SK-N-SH (cell line): ENCODE measurements at regions of chr19 and their contacts with region 1.

Region 1: DNA sequence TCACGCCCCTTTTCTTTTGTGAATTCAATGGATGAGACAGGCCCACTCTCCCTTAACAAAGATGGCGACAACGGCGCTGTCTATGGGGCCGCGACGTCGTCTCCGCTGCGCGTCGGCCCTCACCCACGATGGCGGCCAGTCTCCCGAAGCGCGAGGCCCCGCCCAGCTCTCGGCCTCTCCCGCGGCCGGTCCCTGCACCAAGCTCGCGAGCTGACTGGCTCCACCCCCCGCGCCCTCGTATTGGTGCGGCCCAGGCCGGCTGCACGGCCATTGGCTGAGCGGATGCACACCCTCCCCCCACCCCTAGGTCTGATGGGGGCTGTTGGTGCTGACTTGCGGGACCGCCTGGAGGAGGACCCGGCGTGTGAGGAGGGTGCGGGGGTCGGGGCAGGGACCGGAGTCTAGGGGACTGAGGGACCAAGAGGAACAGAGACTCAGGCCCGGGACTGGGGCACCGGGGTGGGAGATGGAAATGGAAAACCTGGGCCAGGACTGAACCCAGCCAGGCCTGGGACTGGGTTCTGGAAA is 4.8 kb downstream of the SPHK2 start:
- DNase-seq: peak; percentile 97
- H3K4me3 ChIP-seq: peak overlapping the region; percentile 64 to 68
- H3K27ac ChIP-seq: peak overlapping the region; percentile 78 to 98
- H3K4me1 ChIP-seq: peaks cover 4 to 26% of the 10 kb centered on the region in 2 experiments; a peak in 2 of 4 replicates
- H3K27me3 ChIP-seq: no peaks in the 10 kb centered on the region
- CTCF ChIP-seq: no peak
- EP300 ChIP-seq: no peak
- RAD21 ChIP-seq: no peak

Region 2: DNA sequence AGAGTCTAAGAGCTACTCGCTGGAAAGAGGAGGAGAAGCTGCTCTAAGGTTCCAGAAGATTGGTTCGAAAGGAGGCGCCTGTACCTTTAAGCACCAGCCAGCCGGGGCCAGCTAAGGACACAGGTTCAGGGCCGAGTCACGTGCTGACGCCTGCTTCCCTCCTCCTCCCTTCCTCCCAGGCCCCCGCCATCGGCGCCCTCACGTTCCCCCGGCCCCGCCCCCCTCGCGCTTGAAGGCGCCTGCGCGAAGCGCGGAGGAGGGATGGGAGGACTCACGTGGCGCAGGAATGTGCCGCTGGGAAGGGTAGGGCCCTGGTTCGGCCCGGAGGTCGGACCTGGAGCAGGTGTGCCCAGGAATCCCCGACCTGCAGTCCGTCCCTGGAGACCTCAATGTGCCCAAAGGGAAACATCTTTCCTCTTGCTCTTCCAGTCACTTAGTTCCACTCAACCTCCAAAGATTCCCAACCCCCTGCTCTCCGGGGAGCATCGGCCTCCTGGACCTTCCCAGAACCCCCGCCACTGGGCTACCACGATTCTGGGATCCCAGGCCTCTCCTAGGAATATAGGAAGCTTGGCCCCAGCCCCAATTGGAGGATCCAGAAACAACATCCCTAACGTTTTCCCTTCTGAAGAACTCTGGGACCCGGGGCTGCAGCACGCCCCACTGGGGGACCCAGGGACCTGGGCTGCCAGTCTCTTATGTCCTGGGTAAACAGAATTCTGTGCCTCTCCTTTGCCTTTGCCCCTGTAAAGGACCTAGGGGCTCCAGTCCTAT is 10.5 kb after region 1 on chr19:
- CTCF ChIA-PET with region 1: interaction called, 6 read pairs
- POLR2A ChIA-PET with region 1: interaction called, 13 read pairs
- DNase-seq: peak; percentile 90
- H3K4me3 ChIP-seq: peak overlapping the region; percentile 35 to 79
- H3K27ac ChIP-seq: peak overlapping the region; percentile 96 to 98
- H3K4me1 ChIP-seq: peaks cover 31 to 39% of the 10 kb centered on the region in 2 experiments
- H3K27me3 ChIP-seq: no peaks in the 10 kb centered on the region
- CTCF ChIP-seq: no peak
- EP300 ChIP-seq: peak; percentile 38 to 47; a peak in 3 of 4 replicates
- RAD21 ChIP-seq: no peak